Panc1 (cell line): ENCODE measurements at regions of chr12 and their contacts with region 1.

Region 1: GRCh38 chr12:6688999-6689882 is at the start of gene ZNF384:
- DNase-seq: peak; percentile 86
- ATAC-seq: peak; percentile 94
- H3K4me3 ChIP-seq: peak within 1 kb of the TSS; percentile 83 to 86
- H3K27ac ChIP-seq: peak within 1 kb of the TSS; percentile 97
- H3K4me1 ChIP-seq: peaks cover 14% of the 10 kb centered on the region
- H3K27me3 ChIP-seq: no peaks in the 10 kb centered on the region
- CTCF ChIP-seq: no peak
- total RNA-seq, gene ZNF384: 54.3 TPM

Region 2: DNA sequence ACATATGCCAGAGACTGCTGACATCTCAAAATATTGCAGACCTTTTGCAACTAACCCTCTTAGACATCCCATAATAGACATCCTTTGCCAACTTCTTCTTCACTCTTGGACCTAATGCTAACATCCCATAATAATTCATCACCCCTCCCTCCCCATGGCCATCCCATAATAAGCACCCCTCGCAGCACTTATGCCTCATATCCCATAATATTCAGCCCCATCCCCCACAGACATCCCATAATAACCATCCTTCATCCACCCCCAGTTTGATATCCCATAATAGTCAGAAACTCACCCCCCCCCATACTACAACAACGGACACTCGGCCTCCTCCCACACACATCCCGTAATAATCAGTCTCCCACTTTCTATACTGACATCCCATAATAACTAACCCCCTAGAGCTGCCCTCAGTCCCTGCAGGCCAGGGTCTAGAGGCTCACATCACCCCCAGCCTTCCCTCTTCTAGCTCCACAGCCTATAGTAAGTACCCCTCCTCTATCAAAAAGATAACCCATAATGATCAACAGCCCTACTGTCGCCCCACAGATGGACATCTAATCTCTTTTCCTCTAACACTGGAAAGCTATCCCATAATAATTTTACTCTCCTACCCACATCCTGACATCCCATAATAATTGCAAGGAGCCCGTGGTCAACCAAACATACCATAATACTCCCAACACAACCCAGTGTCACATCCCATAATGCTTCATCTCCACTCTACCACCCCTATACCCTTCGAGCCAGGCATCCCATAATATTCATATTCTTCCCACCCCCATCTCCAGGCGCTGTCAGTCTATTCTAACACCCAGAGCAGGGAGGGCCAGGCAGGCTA is 81.3 kb before region 1 on chr12:
- CTCF ChIA-PET with region 1: no interaction called
- POLR2A ChIA-PET with region 1: interaction called, 11 read pairs
- in situ Hi-C with region 1: no loop called
- intact Hi-C with region 1: loop called (anchors 2 kb)
- DNase-seq: no peak
- ATAC-seq: peak; percentile 14
- H3K4me3 ChIP-seq: peak overlapping the region in 1 of 2 experiments; percentile 23; a peak in 1 of 4 replicates
- H3K27ac ChIP-seq: peak overlapping the region; percentile 63
- H3K4me1 ChIP-seq: peaks cover 17% of the 10 kb centered on the region
- H3K27me3 ChIP-seq: no peaks in the 10 kb centered on the region
- CTCF ChIP-seq: no peak

Region 3: GRCh38 chr12:6620137-6620884 is 68.9 kb before region 1 on chr12:
- CTCF ChIA-PET with region 1: interaction called, 3 read pairs
- POLR2A ChIA-PET with region 1: interaction called, 15 read pairs
- in situ Hi-C with region 1: no loop called
- intact Hi-C with region 1: no loop called
- DNase-seq: no peak
- ATAC-seq: no peak
- H3K4me3 ChIP-seq: no peak overlapping the region
- H3K27ac ChIP-seq: no peak overlapping the region
- H3K4me1 ChIP-seq: no peaks in the 10 kb centered on the region
- H3K27me3 ChIP-seq: no peaks in the 10 kb centered on the region
- CTCF ChIP-seq: no peak

Region 4: GRCh38 chr12:6672143-6672542 is 17.1 kb before region 1 on chr12:
- CTCF ChIA-PET with region 1: no interaction called
- POLR2A ChIA-PET with region 1: interaction called, 14 read pairs
- in situ Hi-C with region 1: no loop called
- intact Hi-C with region 1: no loop called
- DNase-seq: no peak
- ATAC-seq: no peak
- H3K4me3 ChIP-seq: no peak overlapping the region
- H3K27ac ChIP-seq: no peak overlapping the region
- H3K4me1 ChIP-seq: no peaks in the 10 kb centered on the region
- H3K27me3 ChIP-seq: no peaks in the 10 kb centered on the region
- CTCF ChIP-seq: no peak

Region 5: DNA sequence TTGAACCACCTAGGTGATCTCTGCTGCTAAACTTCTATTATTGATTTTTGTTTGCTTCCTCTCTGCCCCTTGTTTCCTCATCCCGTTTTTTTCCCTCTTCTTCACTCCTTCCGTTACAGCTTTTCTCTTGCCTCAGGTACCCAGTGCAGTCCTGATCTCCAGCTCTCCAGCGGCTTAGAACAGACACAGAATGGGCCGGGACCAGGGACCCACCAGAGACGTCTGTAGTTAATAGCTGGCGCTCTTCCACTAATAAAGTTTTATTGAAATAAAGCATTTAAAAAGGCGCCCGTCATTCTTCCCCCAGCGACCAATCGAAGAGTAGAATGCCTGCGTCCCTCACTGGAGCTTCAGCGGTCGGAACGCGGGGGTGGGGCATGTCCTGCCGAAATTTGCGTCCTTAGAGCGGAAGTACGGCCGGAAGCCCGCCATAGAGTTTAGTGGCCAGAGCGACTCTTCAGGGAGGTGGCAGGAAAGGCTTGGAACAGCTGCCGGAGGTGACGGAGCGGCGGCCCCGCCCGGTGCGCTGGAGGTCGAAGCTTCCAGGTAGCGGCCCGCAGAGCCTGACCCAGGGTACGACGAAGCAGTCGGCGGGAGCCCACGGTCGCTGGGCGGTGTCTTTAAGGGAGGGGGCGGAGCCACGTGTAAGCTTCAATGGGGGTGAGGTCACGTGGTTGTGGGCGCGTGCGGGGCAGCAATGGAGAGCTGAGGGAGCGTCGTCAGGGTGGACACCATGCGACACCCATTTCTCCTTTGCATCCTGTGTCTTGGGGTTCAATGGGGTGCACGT is 34.6 kb after region 1 on chr12 and contains the start of gene COPS7A:
- CTCF ChIA-PET with region 1: no interaction called
- POLR2A ChIA-PET with region 1: no interaction called
- in situ Hi-C with region 1: no loop called
- intact Hi-C with region 1: no loop called
- DNase-seq: peak; percentile 89
- ATAC-seq: peak; percentile 98
- H3K4me3 ChIP-seq: peak within 1 kb of the TSS; percentile 57 to 80
- H3K27ac ChIP-seq: peak within 1 kb of the TSS; percentile 94
- H3K4me1 ChIP-seq: peaks cover 3% of the 10 kb centered on the region; the same call in 1 of the 2 replicates
- H3K27me3 ChIP-seq: no peaks in the 10 kb centered on the region
- CTCF ChIP-seq: no peak
- total RNA-seq, gene COPS7A: 37.5 TPM

Region 6: DNA sequence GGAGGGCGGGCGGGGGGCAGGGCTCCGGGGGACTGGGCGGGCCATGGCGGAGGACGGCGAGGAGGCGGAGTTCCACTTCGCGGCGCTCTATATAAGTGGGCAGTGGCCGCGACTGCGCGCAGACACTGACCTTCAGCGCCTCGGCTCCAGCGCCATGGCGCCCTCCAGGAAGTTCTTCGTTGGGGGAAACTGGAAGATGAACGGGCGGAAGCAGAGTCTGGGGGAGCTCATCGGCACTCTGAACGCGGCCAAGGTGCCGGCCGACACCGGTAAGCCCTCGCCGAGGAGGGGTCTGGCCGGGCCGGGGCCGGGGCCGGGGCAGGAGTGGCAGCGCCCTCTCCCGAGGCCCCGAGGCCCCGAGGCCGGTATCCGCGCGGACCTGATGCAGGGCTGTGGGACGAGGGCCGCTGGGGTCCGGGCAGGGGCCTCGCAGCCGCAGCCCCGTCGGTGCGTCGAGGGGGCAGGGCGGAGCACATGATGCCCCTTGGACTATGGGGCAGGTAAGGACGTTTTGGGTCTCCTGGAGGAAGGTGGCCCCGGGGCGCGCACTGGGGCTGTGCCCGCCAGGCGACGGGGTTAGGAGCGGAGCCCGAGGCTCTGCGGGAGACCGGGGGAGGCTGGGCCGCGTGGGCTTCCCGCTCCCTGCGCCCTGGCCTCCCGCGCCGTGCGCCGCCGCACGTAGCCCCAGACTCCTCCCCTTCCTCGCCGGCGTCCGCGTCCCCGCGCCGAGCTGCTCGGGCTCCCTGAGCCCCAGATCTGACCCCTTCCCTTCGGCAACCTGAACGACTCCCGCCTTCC is 178.4 kb after region 1 on chr12 and contains the start of gene TPI1:
- CTCF ChIA-PET with region 1: no interaction called
- POLR2A ChIA-PET with region 1: interaction called, 11 read pairs
- in situ Hi-C with region 1: no loop called
- intact Hi-C with region 1: no loop called
- DNase-seq: no peak
- ATAC-seq: peak; percentile 78
- H3K4me3 ChIP-seq: peak within 1 kb of the TSS; percentile 61 to 92
- H3K27ac ChIP-seq: peak within 1 kb of the TSS; percentile 82
- H3K4me1 ChIP-seq: peaks cover 28% of the 10 kb centered on the region
- H3K27me3 ChIP-seq: no peaks in the 10 kb centered on the region
- CTCF ChIP-seq: no peak
- total RNA-seq, gene TPI1: 693 TPM